Activated CD4-positive, alpha-beta memory T cell treated with anti-CD3 and anti-CD28 coated beads for 36 hours (primary cell): ENCODE measurements at regions of chr16 and their contacts with region 1.

Region 1: GRCh38 chr16:8797364-8798173 is at the starts of genes PMM2 and TMEM186:
- DNase-seq: peak; percentile 97
- H3K4me3 Mint-ChIP-seq: peak within 1 kb of the TSS; percentile 92
- H3K27ac Mint-ChIP-seq: peak within 1 kb of the TSS; percentile 88
- H3K4me1 Mint-ChIP-seq: peaks cover 50% of the 10 kb centered on the region
- H3K27me3 Mint-ChIP-seq: no peaks in the 10 kb centered on the region
- total RNA-seq, gene PMM2: 34.0 to 36.0 TPM
- total RNA-seq, gene TMEM186: 16.0 TPM

Region 2: GRCh38 chr16:8567750-8568617 is 229.6 kb before region 1 on chr16:
- CTCF ChIA-PET with region 1: interaction called, 5 read pairs
- POLR2A ChIA-PET with region 1: no interaction called
- intact Hi-C with region 1: loop called (anchors 1 kb)
- DNase-seq: peak; percentile 86
- H3K4me3 Mint-ChIP-seq: no peak overlapping the region
- H3K27ac Mint-ChIP-seq: no peak overlapping the region
- H3K4me1 Mint-ChIP-seq: peaks cover 5% of the 10 kb centered on the region
- H3K27me3 Mint-ChIP-seq: peaks cover 8% of the 10 kb centered on the region

Region 3: DNA sequence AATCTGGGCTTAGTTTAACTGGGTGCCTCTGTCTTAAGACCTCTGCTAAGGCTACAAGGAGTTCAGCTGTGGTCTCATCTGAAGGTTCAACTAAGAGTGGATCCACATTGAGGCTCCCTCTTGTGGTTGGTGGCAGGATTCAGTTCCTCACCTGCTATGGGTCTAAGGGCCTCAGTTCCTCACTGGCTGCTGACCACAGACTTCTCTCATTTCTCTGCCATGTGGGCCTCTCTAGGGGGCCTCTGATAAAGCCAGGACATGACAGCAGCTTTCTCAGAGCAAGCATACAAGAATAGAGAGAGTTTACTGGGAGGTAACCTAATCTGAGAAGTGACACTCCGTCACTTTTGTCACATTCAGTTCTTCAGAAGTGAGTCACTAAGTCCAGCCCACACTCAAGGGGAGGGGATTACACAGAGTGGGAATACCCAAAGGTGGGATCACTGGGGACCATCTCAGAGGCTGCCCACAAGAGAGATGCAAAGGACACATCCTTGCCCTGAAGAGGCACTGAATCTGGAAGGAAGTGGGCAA is 142.3 kb before region 1 on chr16:
- CTCF ChIA-PET with region 1: interaction called, 11 read pairs
- POLR2A ChIA-PET with region 1: no interaction called
- intact Hi-C with region 1: loop called (anchors 2 kb)
- DNase-seq: peak; percentile 81
- H3K4me3 Mint-ChIP-seq: no peak overlapping the region
- H3K27ac Mint-ChIP-seq: peak overlapping the region; percentile 64
- H3K4me1 Mint-ChIP-seq: peaks cover 18% of the 10 kb centered on the region
- H3K27me3 Mint-ChIP-seq: no peaks in the 10 kb centered on the region

Region 4: DNA sequence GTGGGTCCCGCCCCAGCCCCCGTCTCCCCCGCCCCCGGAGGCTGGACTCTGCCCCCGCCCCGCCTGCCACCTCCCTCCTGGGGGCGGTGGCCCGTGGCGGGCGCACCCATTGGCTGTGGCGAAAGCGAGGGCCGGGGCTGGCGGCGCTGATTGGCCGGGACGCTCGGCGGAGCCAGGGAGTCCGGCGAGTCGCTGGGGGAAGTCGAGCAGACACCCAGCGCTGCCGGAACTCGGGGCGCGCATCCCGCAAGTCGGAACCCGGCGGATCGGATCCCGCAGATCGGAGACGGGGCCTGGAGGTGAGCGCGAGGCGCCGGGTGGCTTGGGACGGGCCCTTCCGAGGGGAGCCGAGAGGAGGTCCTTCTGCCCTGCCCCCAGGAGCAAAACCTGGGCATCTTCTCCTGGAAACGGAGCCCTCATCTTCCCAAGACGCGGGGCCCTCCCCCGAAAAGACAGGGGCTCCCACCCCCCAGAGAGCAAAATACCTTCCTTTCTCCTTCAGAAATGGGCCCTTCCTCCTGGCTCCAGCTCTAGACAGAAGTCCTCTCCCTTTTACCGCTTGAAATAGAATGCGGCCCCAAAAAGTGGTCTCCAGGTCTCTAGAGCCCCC is 123.1 kb before region 1 on chr16 and contains the start of gene ABAT:
- CTCF ChIA-PET with region 1: interaction called, 4 read pairs
- POLR2A ChIA-PET with region 1: no interaction called
- intact Hi-C with region 1: loop called (anchors 1 kb)
- DNase-seq: peak; percentile 93
- H3K4me3 Mint-ChIP-seq: peak within 1 kb of the TSS; percentile 79
- H3K27ac Mint-ChIP-seq: peak within 1 kb of the TSS; percentile 68
- H3K4me1 Mint-ChIP-seq: peaks cover 18% of the 10 kb centered on the region
- H3K27me3 Mint-ChIP-seq: no peaks in the 10 kb centered on the region
- total RNA-seq, gene ABAT: 8.7 to 10.0 TPM

Region 5: DNA sequence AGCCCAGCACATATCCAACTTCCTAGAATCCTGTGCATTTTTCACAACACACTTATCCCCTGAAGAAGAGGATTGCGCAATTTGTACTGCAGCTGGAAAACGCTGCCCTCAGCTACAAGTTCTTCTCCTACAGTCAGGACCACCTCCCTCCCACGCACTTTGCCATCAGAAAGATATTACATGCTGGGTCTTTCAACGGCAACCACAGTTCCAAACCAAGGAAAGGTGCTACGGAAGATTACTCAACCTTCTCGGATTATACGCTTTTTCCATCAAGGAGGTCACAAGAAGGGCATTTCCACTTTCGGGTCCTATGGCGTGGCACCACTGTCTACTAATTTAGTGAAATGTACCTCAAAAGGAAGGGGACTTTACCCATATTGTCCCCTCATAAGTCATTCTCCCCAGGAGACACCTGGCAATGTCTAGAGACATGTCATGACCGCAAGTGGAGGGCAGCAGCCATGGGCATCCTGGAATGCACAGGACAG is 130.9 kb after region 1 on chr16:
- CTCF ChIA-PET with region 1: no interaction called
- POLR2A ChIA-PET with region 1: no interaction called
- intact Hi-C with region 1: no loop called
- DNase-seq: peak; percentile 73
- H3K4me3 Mint-ChIP-seq: no peak overlapping the region
- H3K27ac Mint-ChIP-seq: peak overlapping the region; percentile 46
- H3K4me1 Mint-ChIP-seq: peaks cover 67% of the 10 kb centered on the region
- H3K27me3 Mint-ChIP-seq: no peaks in the 10 kb centered on the region

Region 6: GRCh38 chr16:9090960-9091866 is 293.6 kb after region 1 on chr16 and contains the start of gene HAPSTR1:
- CTCF ChIA-PET with region 1: no interaction called
- POLR2A ChIA-PET with region 1: interaction called, 6 read pairs
- intact Hi-C with region 1: loop called (anchors 5 kb)
- DNase-seq: peak; percentile 100
- H3K4me3 Mint-ChIP-seq: peak within 1 kb of the TSS; percentile 94
- H3K27ac Mint-ChIP-seq: peak within 1 kb of the TSS; percentile 95
- H3K4me1 Mint-ChIP-seq: peaks cover 29% of the 10 kb centered on the region
- H3K27me3 Mint-ChIP-seq: no peaks in the 10 kb centered on the region
- total RNA-seq, gene HAPSTR1: 47.1 to 49.1 TPM